Head of caudate nucleus (tissue), 42 donors: ENCODE measurements at regions of chr1 and their contacts with region 1.

Region 1: GRCh38 chr1:163174524-163175437 is 27.9 kb downstream of the RGS5 start:
- DNase-seq: peak; percentile 50 to 85 (median 72)

Region 2: DNA sequence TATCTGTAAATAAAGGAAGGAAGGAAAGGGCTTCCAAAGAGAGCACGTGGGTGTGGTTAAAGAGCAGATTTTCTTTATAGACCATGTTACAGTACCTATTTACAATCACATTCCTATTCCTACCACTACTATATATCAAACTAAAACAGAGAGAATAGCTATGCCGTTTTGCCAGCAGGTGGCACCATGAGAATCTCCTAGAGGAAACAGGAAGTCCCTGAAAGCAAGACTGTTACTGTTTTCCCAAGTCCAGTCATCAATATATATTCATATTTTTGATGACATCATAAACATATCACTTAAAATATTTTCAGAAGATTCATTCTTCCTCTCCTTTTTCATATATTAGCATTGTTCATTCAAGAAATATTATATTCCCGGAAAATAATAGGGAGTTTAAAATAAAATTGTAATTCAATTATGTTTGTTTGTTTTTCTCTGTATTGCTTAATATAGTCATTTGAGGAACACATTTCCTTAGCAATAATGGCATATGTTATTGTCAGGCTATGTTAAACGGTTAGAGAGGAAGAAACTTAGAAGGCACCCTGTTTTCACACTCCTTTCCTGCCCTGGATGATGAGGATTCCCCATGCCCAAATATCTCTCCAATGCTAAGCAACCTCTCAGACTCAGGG is 320.4 kb before region 1 on chr1:
- intact Hi-C with region 1: loop called (anchors 10 kb)
- DNase-seq: peak; percentile 13 to 83 (median 66)

Region 3: GRCh38 chr1:163436140-163436812 is 261.5 kb after region 1 on chr1:
- intact Hi-C with region 1: no loop called
- DNase-seq: no peak